Natural killer cell (primary cell): ENCODE measurements at regions of chr19 and their contacts with region 1.

Region 1: GRCh38 chr19:12440541-12441316 is at the start of gene ZNF443:
- DNase-seq: peak; percentile 97 to 100
- ATAC-seq: peak; percentile 94 to 99 (median 97)
- H3K4me3 ChIP-seq: peak within 1 kb of the TSS; percentile 85
- H3K4me3 Mint-ChIP-seq: peak within 1 kb of the TSS; percentile 100
- H3K27ac ChIP-seq: peak within 1 kb of the TSS; percentile 73
- H3K27ac Mint-ChIP-seq: peak within 1 kb of the TSS; percentile 91 to 99
- H3K4me1 ChIP-seq: peaks cover 14% of the 10 kb centered on the region
- H3K4me1 Mint-ChIP-seq: peaks cover 6 to 24% of the 10 kb centered on the region in 2 donors
- H3K27me3 ChIP-seq: no peaks in the 10 kb centered on the region
- H3K27me3 Mint-ChIP-seq: no peaks in the 10 kb centered on the region
- CTCF ChIP-seq: no peak
- total RNA-seq, gene ZNF443: 3.5 to 6.1 (median 3.9) TPM

Region 2: DNA sequence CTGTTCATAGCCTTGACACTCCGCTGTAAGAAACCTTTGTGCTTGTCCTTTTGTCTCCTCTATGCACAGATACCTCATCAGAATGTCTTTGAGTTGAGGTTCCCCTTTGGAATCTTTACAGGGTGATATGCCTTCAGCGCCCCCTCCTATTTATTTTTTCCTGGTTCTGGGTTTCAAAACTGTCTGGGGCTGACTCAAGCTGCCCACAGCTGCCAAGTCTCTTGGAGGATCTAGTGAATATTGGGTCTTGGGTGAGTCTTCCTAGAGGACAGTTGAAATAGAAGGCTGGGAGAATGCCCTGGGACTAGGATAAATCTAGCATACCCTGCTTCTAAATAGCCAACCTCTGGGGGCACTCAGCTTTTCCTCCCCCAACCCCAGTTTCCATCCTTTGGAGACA is 276.9 kb before region 1 on chr19:
- intact Hi-C with region 1: no loop called
- DNase-seq: no peak
- ATAC-seq: no peak
- H3K4me3 ChIP-seq: peak overlapping the region; percentile 98
- H3K4me3 Mint-ChIP-seq: peak overlapping the region; percentile 96
- H3K27ac ChIP-seq: peak overlapping the region; percentile 98
- H3K27ac Mint-ChIP-seq: peak overlapping the region; percentile 97 to 98
- H3K4me1 ChIP-seq: peaks cover 17% of the 10 kb centered on the region
- H3K4me1 Mint-ChIP-seq: peaks cover 38 to 43% of the 10 kb centered on the region in 2 donors
- H3K27me3 ChIP-seq: no peaks in the 10 kb centered on the region
- H3K27me3 Mint-ChIP-seq: no peaks in the 10 kb centered on the region
- CTCF ChIP-seq: no peak

Region 3: GRCh38 chr19:12400633-12401502 is 39.9 kb before region 1 on chr19 and contains the start of gene ZNF799:
- intact Hi-C with region 1: loop called (anchors 5 kb)
- DNase-seq: peak; percentile 75 to 86
- ATAC-seq: peak; percentile 92 to 96 (median 96)
- H3K4me3 ChIP-seq: peak within 1 kb of the TSS; percentile 97
- H3K4me3 Mint-ChIP-seq: peak within 1 kb of the TSS; percentile 95
- H3K27ac ChIP-seq: peak within 1 kb of the TSS; percentile 66
- H3K27ac Mint-ChIP-seq: peak within 1 kb of the TSS; percentile 85 to 91
- H3K4me1 ChIP-seq: peaks cover 11% of the 10 kb centered on the region
- H3K4me1 Mint-ChIP-seq: peaks cover 20 to 33% of the 10 kb centered on the region in 2 donors
- H3K27me3 ChIP-seq: no peaks in the 10 kb centered on the region
- H3K27me3 Mint-ChIP-seq: no peaks in the 10 kb centered on the region
- CTCF ChIP-seq: no peak
- total RNA-seq, gene ZNF799: 2.8 to 7.5 (median 4.6) TPM